Transverse colon (tissue), 4 donors: ENCODE measurements at regions of chr5 and their contacts with region 1.

Region 1: DNA sequence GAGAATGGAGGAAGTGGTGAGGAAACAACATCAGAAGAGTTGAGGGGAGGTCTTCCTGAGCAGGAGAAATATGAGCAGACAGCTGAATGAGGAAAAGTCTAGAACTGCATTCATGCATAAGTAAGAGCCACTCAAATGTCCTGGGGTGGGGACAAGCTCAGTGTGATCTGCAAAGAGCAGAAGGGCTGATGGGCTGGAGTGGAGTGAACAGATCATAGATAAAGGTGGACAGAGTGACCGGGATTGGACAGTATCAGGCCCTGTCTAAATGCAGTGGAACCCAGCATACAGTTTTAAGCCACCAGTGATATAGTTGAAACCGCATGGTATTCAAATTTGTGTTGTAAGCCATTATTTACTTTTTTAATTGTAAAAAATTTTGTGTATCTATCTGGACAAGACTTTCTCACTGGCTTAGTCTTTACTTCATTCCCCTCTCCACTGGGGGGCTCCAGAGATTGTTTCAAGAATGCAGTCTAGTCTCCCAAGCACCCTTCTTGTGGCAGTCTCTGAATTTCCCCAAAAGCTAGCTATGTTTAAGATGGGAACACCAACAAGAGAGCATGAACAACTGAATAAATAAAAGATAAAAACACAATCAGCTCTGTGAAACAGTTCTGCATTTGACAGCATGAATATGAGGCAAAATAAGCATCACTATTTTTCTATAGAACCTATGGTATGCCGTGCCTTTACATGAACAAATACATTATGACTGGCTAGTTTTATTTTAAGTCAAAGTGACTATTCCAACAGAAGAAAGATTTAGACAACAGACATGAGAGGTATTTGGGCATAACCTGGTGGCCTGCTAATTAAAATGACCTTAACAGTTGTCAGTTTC is 10.7 kb upstream of the STK32A start:
- DNase-seq: peak; percentile 16
- H3K4me3 ChIP-seq: no peak overlapping the region
- H3K27ac ChIP-seq: no peak overlapping the region
- H3K4me1 ChIP-seq: no peaks in the 10 kb centered on the region
- H3K27me3 ChIP-seq: no peaks in the 10 kb centered on the region
- CTCF ChIP-seq: peak; percentile 55 to 64 (median 58)
- EP300 ChIP-seq: no peak
- POLR2A ChIP-seq: no peak

Region 2: GRCh38 chr5:147037515-147038205 is 186.5 kb before region 1 on chr5:
- in situ Hi-C with region 1: no loop called
- intact Hi-C with region 1: no loop called
- DNase-seq: no peak
- H3K4me3 ChIP-seq: no peak overlapping the region
- H3K27ac ChIP-seq: no peak overlapping the region
- H3K4me1 ChIP-seq: no peaks in the 10 kb centered on the region
- H3K27me3 ChIP-seq: no peaks in the 10 kb centered on the region
- CTCF ChIP-seq: no peak
- EP300 ChIP-seq: no peak
- POLR2A ChIP-seq: no peak

Region 3: DNA sequence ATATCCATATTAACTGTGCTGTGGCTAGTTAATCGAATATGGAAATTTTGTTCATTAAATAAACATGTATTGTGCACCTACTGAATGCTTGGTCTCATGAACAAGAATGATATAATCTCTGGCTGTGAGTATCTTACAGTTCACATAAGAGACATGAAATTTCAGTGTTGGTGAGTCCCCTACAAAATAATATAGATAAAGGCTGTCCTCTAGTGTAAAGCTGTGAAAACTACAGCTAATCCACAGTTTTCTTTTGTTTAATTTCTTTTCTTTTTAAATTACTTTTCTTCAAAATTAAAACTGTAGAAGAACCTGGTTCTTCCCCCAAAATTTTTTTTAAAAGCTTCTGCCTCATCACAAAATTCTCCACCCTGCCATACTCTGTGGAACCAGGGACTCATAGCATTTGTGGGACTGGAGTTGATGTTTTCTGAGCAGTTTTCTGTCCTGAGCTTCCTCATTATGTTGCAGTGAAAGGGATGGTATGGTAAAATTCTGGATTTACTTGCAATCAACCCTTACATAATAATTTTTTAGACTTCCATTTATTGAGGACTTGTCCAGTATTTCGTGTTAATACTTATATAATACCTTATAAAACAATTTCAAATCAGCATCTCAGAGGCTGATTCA is 145.7 kb after region 1 on chr5:
- in situ Hi-C with region 1: loop called (anchors 10 to 25 kb)
- intact Hi-C with region 1: no loop called
- DNase-seq: no peak
- H3K4me3 ChIP-seq: no peak overlapping the region
- H3K27ac ChIP-seq: no peak overlapping the region
- H3K4me1 ChIP-seq: no peaks in the 10 kb centered on the region
- H3K27me3 ChIP-seq: no peaks in the 10 kb centered on the region
- CTCF ChIP-seq: peak; percentile 48 to 66 (median 60)
- EP300 ChIP-seq: no peak
- POLR2A ChIP-seq: no peak

Region 4: DNA sequence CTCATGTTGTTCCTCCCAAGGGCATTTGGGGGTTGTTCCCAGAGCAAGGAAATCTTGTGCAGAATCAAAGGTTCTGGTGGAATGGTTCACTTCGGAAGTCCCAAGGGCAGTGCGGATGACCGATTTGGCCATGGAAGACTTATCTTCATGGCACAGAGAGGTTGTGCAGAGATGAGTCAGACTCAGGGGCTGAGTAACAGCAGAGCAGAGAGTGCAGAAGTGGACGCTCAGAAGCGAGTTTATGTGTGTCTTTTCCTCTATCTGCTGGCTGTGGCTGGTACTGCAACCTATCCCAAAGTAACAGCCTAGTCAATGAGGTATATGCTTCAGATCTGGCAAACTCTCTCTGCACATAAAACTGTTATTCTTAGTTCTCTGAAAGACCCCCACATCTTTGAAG is 167.6 kb after region 1 on chr5:
- in situ Hi-C with region 1: no loop called
- intact Hi-C with region 1: loop called (anchors 10 kb)
- DNase-seq: peak; percentile 48
- H3K4me3 ChIP-seq: no peak overlapping the region
- H3K27ac ChIP-seq: no peak overlapping the region
- H3K4me1 ChIP-seq: peaks cover 0 to 9% (median 0%) of the 10 kb centered on the region in 4 donors
- H3K27me3 ChIP-seq: no peaks in the 10 kb centered on the region
- CTCF ChIP-seq: peak; percentile 50 to 62 (median 56)
- EP300 ChIP-seq: no peak
- POLR2A ChIP-seq: no peak

Region 5: DNA sequence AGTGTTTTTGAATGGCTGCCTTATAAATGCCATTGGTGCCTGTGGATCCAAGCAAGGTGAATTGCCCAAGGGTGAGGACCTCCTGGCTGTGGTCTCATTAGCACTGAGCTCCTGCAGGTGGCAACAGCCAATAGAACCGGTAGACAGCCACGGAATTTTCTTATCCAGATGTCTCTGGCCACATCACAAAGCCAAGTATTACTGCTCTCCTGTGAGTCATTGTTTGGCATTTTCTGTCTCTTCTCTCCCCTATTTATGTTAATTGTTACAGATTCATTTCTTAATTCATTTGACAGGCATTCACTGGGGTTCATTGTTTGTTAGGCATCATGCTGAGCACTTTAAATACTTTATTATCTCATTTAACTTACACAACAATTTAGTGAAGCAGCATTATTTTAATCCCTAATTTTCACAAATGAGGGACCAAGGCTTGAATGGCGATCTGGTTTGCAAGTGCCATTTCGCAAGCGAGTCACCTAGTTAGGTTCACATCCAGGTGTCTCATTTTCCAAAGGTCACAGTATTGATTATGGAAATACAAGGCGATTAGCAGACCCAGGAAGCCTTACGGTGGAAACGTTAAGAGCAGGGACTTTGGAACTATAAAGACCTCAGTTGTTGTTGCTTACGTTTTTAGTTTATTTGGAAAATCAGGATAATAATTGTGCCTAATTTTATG is 343.9 kb after region 1 on chr5:
- in situ Hi-C with region 1: loop called (anchors 10 to 25 kb)
- intact Hi-C with region 1: loop called (anchors 5 kb)
- DNase-seq: no peak
- H3K4me3 ChIP-seq: no peak overlapping the region
- H3K27ac ChIP-seq: no peak overlapping the region
- H3K4me1 ChIP-seq: no peaks in the 10 kb centered on the region
- H3K27me3 ChIP-seq: no peaks in the 10 kb centered on the region
- CTCF ChIP-seq: no peak
- EP300 ChIP-seq: no peak
- POLR2A ChIP-seq: no peak

Region 6: GRCh38 chr5:147576646-147577535 is 352.7 kb after region 1 on chr5:
- in situ Hi-C with region 1: loop called in 2 of 4 experiments (anchors 10 to 25 kb)
- intact Hi-C with region 1: loop called (anchors 5 kb)
- DNase-seq: peak; percentile 53
- H3K4me3 ChIP-seq: no peak overlapping the region
- H3K27ac ChIP-seq: no peak overlapping the region
- H3K4me1 ChIP-seq: no peaks in the 10 kb centered on the region
- H3K27me3 ChIP-seq: no peaks in the 10 kb centered on the region
- CTCF ChIP-seq: peak; percentile 65 to 83 (median 77)
- EP300 ChIP-seq: no peak
- POLR2A ChIP-seq: no peak

Region 7: DNA sequence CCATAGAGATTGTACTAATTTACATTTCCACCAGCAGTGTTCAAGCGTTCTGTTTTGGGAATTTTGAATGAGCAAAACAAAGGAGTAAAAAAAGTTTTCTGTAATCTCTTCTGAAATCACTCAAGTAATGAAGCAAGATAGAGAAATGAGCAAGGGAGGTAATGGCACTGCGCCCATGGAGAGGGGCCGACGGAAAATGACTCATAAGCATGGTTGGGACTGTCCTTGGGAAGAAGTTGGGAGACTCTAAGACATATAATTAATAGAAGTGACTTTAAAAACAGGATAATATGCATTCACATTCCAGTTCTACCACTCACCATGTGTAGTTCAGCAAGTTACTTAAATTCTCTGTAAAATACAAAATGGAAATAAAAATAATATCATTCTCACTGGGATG is 744.7 kb after region 1 on chr5:
- in situ Hi-C with region 1: no loop called
- intact Hi-C with region 1: no loop called
- DNase-seq: no peak
- H3K4me3 ChIP-seq: no peak overlapping the region
- H3K27ac ChIP-seq: no peak overlapping the region
- H3K4me1 ChIP-seq: peaks cover 0 to 11% (median 0%) of the 10 kb centered on the region in 4 donors
- H3K27me3 ChIP-seq: no peaks in the 10 kb centered on the region
- CTCF ChIP-seq: no peak
- EP300 ChIP-seq: no peak
- POLR2A ChIP-seq: no peak